ENCODE measurements at regions of chr7 and their contacts with region 1.

Region 1: DNA sequence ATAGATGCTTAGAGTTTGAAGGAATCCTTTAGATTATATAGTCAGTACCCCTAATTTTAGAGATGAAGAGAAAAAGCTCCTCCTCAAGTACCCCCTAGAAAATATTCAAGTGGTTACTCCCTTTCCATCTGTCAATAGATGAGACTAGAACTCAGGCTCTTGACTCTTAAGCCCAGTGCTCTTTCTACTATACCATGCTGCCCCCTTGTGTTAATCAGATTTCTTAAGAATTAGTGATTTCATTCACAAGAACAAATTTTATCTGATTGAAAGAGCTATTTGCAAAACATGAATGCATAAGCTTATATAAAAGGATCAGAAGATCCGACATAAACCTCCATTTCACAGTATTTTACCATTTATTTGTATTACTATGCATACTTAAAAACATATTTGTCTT is 179.3 kb downstream of the TFEC start:
- DNase-seq: peak in 1 of 2 donors; percentile 48
- ATAC-seq: no peak
- H3K4me3 ChIP-seq: no peak overlapping the region
- H3K4me3 Mint-ChIP-seq: no peak overlapping the region
- H3K27ac ChIP-seq: no peak overlapping the region
- H3K27ac Mint-ChIP-seq: no peak overlapping the region
- H3K4me1 ChIP-seq: no peaks in the 10 kb centered on the region
- H3K4me1 Mint-ChIP-seq: no peaks in the 10 kb centered on the region
- H3K27me3 ChIP-seq: peaks cover 2% of the 10 kb centered on the region
- H3K27me3 Mint-ChIP-seq: no peaks in the 10 kb centered on the region
- CTCF ChIP-seq: no peak

Region 2: DNA sequence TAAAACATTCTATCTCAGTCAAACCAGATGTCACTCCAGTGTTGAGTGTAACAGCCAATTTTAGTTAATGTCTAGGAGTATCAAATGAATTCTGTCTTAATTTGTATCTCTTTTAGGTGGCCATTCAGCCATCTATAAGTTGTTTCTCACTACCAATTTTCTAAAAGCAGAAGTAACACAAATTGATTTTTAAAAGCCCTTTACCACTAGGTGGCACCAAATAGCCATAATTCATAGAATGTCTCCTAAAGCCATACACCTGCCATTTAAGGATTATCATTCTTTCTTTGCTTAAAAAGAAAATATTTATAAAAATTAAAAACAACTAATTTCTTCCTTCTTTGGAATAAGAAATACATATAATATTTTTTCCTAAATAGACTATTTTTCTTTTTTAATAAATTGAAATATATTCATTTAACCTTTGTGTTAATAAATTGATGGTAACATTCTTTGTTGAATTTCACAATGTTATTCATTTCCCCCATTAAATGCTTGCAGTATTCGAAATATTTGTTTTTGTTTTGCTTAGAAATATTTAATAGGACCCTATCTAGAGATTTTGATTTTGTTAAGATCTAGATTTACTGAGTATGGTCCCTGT is 1824.7 kb before region 1 on chr7:
- intact Hi-C with region 1: loop called (anchors 2 kb)
- DNase-seq: peak in 1 of 2 donors; percentile 76
- ATAC-seq: no peak
- H3K4me3 ChIP-seq: no peak overlapping the region
- H3K4me3 Mint-ChIP-seq: no peak overlapping the region
- H3K27ac ChIP-seq: no peak overlapping the region
- H3K27ac Mint-ChIP-seq: no peak overlapping the region
- H3K4me1 ChIP-seq: no peaks in the 10 kb centered on the region
- H3K4me1 Mint-ChIP-seq: no peaks in the 10 kb centered on the region
- H3K27me3 ChIP-seq: no peaks in the 10 kb centered on the region
- H3K27me3 Mint-ChIP-seq: no peaks in the 10 kb centered on the region
- CTCF ChIP-seq: peak; percentile 68

Region 3: DNA sequence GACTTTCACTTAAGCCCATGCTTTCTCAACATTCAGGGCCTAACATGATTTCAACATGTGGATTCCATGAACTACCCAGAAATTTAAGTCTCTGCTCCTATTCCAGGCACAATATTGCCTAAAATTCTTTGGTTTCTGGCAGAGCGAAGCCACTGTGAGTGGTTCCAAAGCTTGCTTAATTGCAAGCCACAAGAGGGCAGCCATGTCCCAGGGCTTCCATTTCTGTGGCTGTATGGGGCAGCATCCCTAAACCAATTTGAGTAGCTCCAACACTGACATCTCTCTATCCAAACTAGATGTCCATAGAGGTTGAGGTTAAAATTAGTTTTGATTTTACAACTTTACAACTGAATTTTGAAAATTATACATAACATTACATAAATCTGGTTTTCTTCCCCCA is 985.7 kb before region 1 on chr7:
- intact Hi-C with region 1: loop called (anchors 10 kb)
- DNase-seq: peak; percentile 16 to 77
- ATAC-seq: peak; percentile 52 to 62 (median 60)
- H3K4me3 ChIP-seq: no peak overlapping the region
- H3K4me3 Mint-ChIP-seq: no peak overlapping the region
- H3K27ac ChIP-seq: no peak overlapping the region
- H3K27ac Mint-ChIP-seq: no peak overlapping the region
- H3K4me1 ChIP-seq: no peaks in the 10 kb centered on the region
- H3K4me1 Mint-ChIP-seq: no peaks in the 10 kb centered on the region
- H3K27me3 ChIP-seq: no peaks in the 10 kb centered on the region
- H3K27me3 Mint-ChIP-seq: no peaks in the 10 kb centered on the region
- CTCF ChIP-seq: peak; percentile 30

Region 4: GRCh38 chr7:115812794-115813193 is 38.5 kb before region 1 on chr7:
- intact Hi-C with region 1: no loop called
- DNase-seq: no peak
- ATAC-seq: no peak
- H3K4me3 ChIP-seq: no peak overlapping the region
- H3K4me3 Mint-ChIP-seq: no peak overlapping the region
- H3K27ac ChIP-seq: no peak overlapping the region
- H3K27ac Mint-ChIP-seq: no peak overlapping the region
- H3K4me1 ChIP-seq: no peaks in the 10 kb centered on the region
- H3K4me1 Mint-ChIP-seq: no peaks in the 10 kb centered on the region
- H3K27me3 ChIP-seq: no peaks in the 10 kb centered on the region
- H3K27me3 Mint-ChIP-seq: no peaks in the 10 kb centered on the region
- CTCF ChIP-seq: no peak

Region 5: GRCh38 chr7:116443101-116443523 is 591.8 kb after region 1 on chr7:
- intact Hi-C with region 1: no loop called
- DNase-seq: no peak
- ATAC-seq: no peak
- H3K4me3 ChIP-seq: no peak overlapping the region
- H3K4me3 Mint-ChIP-seq: no peak overlapping the region
- H3K27ac ChIP-seq: no peak overlapping the region
- H3K27ac Mint-ChIP-seq: no peak overlapping the region
- H3K4me1 ChIP-seq: no peaks in the 10 kb centered on the region
- H3K4me1 Mint-ChIP-seq: no peaks in the 10 kb centered on the region
- H3K27me3 ChIP-seq: no peaks in the 10 kb centered on the region
- H3K27me3 Mint-ChIP-seq: peaks cover 12 to 15% of the 10 kb centered on the region in 2 donors
- CTCF ChIP-seq: no peak

Measured in natural killer cell (primary cell).